ENCODE measurements at regions of chr9 and their contacts with region 1.

Region 1: DNA sequence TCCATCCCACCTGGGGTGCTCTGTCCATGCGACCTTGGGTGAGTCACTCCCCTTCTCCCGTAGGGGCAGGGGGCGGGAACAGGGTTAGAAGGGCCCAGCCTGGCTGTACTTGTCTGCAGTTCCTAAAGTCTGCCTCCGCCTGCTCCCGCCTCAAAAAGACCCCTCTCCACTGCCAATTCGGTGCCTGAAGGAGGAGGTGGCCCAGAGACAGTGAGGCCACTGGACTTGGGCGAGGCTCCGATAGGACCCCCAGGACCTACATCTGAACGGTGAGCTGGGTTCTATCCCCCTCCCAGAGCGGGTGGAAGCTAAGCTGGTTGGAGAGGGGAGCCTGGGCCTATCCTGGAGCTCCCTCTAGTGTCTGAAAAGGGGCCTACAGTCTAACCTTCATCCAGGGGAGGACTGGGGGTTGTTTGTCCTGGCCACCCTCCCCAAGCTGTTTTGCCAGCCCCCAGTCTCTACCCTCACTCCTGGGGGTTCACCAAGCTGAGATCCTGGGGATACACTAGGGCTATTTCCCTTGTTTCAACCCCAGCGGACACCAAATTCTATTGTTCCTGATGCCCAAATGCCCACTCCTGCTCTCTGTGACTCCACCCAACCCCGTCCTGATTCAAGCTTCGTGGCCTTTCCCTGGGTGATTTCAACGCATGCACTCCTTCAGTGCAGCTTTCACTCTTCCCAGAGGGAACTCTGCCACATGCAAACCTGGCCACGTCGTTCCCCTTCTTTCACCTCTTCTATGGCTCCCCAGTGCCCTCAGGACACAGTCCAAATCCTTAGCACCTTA is 6.1 kb upstream of the CRB2 start:
- DNase-seq: peak; percentile 79
- ATAC-seq: peak; percentile 85
- H3K4me3 Mint-ChIP-seq: no peak overlapping the region
- H3K27ac Mint-ChIP-seq: no peak overlapping the region
- H3K4me1 Mint-ChIP-seq: no peaks in the 10 kb centered on the region
- H3K27me3 Mint-ChIP-seq: peaks cover 9% of the 10 kb centered on the region

Region 2: DNA sequence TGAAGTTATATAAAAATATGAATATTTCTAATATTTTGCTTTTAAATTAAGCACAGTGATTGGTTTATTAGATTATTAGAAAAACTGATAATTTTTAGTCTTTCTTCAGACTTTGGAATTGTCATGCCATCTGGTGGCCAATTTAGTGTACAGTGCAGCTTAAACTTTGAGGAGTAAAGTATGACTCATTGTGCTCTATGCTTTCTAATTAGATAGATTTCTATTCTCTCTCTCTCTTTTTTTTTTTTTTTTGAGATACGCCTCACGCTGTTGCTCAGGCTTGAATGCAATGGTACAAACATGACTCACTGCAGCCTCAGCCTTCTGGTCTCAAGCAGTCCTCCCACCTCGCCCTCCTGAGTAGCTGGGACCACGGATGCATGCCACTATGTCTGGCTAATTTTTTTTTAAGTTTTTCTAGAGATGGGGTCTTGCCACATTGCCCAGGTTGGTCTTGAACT is 358.5 kb before region 1 on chr9:
- CTCF ChIA-PET with region 1: no interaction called
- POLR2A ChIA-PET with region 1: no interaction called
- intact Hi-C with region 1: loop called in 1 of 2 experiments (anchors 10 kb)
- DNase-seq: peak; percentile 66
- ATAC-seq: peak; percentile 90
- H3K4me3 Mint-ChIP-seq: no peak overlapping the region
- H3K27ac Mint-ChIP-seq: no peak overlapping the region
- H3K4me1 Mint-ChIP-seq: peaks cover 7% of the 10 kb centered on the region
- H3K27me3 Mint-ChIP-seq: no peaks in the 10 kb centered on the region

Region 3: GRCh38 chr9:123102375-123103110 is 247.3 kb before region 1 on chr9:
- CTCF ChIA-PET with region 1: interaction called, 12 read pairs
- POLR2A ChIA-PET with region 1: no interaction called
- intact Hi-C with region 1: loop called in 1 of 2 experiments (anchors 5 kb)
- DNase-seq: no peak
- ATAC-seq: no peak
- H3K4me3 Mint-ChIP-seq: no peak overlapping the region
- H3K27ac Mint-ChIP-seq: no peak overlapping the region
- H3K4me1 Mint-ChIP-seq: no peaks in the 10 kb centered on the region
- H3K27me3 Mint-ChIP-seq: no peaks in the 10 kb centered on the region

Region 4: DNA sequence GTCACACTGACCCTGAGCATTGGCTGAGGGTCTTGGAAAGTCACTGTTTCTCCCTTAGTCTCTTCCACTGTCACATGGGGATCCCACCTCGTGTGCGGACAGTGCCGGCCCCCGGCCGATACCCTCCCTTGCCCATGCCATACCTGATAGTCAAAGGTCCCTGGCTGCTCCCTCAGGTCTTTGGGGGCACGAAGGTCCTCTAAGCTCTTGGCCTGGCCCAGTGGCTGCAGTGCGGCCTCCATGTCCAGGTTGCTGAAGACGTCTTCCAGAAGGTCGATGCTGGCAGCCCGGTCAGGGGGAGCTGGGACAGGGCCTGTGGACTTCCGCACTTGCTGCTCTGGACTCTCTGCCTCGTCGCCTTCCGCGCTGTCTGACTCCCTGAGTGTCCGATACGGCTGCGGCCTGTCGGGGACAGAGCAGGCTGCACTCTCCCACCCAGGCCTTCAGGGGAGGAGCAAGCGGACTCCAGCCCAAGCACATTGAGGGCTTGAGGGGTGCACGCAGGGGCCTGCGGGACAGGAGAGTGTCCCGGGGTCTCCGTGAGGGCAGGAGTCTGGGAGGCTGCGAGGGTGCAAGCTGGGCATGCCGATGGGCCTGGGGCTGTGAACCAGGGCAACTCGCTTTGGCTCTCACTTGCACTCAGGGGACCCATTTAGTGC is 33.8 kb after region 1 on chr9:
- CTCF ChIA-PET with region 1: interaction called, 25 read pairs
- POLR2A ChIA-PET with region 1: no interaction called
- intact Hi-C with region 1: loop called (anchors 1 kb)
- DNase-seq: no peak
- ATAC-seq: no peak
- H3K4me3 Mint-ChIP-seq: no peak overlapping the region
- H3K27ac Mint-ChIP-seq: no peak overlapping the region
- H3K4me1 Mint-ChIP-seq: no peaks in the 10 kb centered on the region
- H3K27me3 Mint-ChIP-seq: no peaks in the 10 kb centered on the region

Region 5: GRCh38 chr9:124040935-124041816 is 691.3 kb after region 1 on chr9:
- CTCF ChIA-PET with region 1: no interaction called
- POLR2A ChIA-PET with region 1: no interaction called
- intact Hi-C with region 1: loop called in 1 of 2 experiments (anchors 1 kb)
- DNase-seq: peak; percentile 72
- ATAC-seq: peak; percentile 46
- H3K4me3 Mint-ChIP-seq: no peak overlapping the region
- H3K27ac Mint-ChIP-seq: peak overlapping the region; percentile 55
- H3K4me1 Mint-ChIP-seq: peaks cover 14% of the 10 kb centered on the region
- H3K27me3 Mint-ChIP-seq: peaks cover 59% of the 10 kb centered on the region

Measured in activated CD4-positive, alpha-beta T cell treated with anti-CD3 and anti-CD28 coated beads for 36 hours (primary cell).